ENCODE measurements at regions of chr7 and their contacts with region 1.

Region 1: GRCh38 chr7:140375892-140376730 is 22.2 kb downstream of the SLC37A3 start:
- DNase-seq: peak in 4 of 5 donors; percentile 30 to 48 (median 40)
- H3K4me3 ChIP-seq: peak overlapping the region; percentile 14 to 56
- H3K4me3 Mint-ChIP-seq: peak overlapping the region; percentile 75 to 99 (median 86)
- H3K27ac ChIP-seq: peak overlapping the region; percentile 59
- H3K27ac Mint-ChIP-seq: peak overlapping the region; percentile 84 to 97 (median 93)
- H3K4me1 ChIP-seq: peaks cover 15% of the 10 kb centered on the region
- H3K4me1 Mint-ChIP-seq: peaks cover 10 to 23% (median 13%) of the 10 kb centered on the region in 4 donors
- H3K27me3 ChIP-seq: no peaks in the 10 kb centered on the region
- H3K27me3 Mint-ChIP-seq: no peaks in the 10 kb centered on the region

Region 2: DNA sequence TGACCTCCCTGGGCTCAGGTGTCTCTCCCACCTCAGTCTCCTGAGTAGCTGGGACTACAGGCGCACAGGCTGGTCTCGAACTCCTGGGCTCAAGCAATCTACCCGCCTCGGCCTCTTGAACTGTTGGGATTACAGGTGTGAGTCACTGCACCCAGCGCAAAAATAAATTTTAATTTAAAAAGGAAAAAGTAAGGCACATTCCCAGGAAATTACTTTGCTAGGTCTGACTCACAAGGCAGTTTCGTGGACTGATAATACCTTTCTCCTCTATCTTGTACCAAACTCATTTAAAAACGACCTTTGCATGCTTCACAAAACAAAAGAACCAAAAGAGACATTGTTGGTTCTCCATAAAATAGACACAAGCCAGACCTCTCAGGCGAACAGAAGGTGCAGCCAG is 343.1 kb before region 1 on chr7:
- CTCF ChIA-PET with region 1: no interaction called
- POLR2A ChIA-PET with region 1: no interaction called
- intact Hi-C with region 1: no loop called
- DNase-seq: no peak
- H3K4me3 ChIP-seq: no peak overlapping the region
- H3K4me3 Mint-ChIP-seq: no peak overlapping the region
- H3K27ac ChIP-seq: no peak overlapping the region
- H3K27ac Mint-ChIP-seq: peak overlapping the region in 1 of 7 donors; percentile 77
- H3K4me1 ChIP-seq: peaks cover 11% of the 10 kb centered on the region
- H3K4me1 Mint-ChIP-seq: peaks cover 17 to 38% (median 25%) of the 10 kb centered on the region in 4 donors
- H3K27me3 ChIP-seq: no peaks in the 10 kb centered on the region
- H3K27me3 Mint-ChIP-seq: no peaks in the 10 kb centered on the region

Region 3: GRCh38 chr7:140397784-140398750 is 22.0 kb after region 1 on chr7 and contains the start of gene SLC37A3:
- CTCF ChIA-PET with region 1: interaction called, 10 read pairs
- POLR2A ChIA-PET with region 1: interaction called, 9 read pairs
- intact Hi-C with region 1: no loop called
- DNase-seq: peak; percentile 77 to 85 (median 81)
- H3K4me3 ChIP-seq: peak within 1 kb of the TSS; percentile 33 to 63
- H3K4me3 Mint-ChIP-seq: peak within 1 kb of the TSS; percentile 90 to 95 (median 90)
- H3K27ac ChIP-seq: peak within 1 kb of the TSS; percentile 77
- H3K27ac Mint-ChIP-seq: peak within 1 kb of the TSS; percentile 71 to 94 (median 88)
- H3K4me1 ChIP-seq: peaks cover 21% of the 10 kb centered on the region
- H3K4me1 Mint-ChIP-seq: peaks cover 16 to 26% (median 20%) of the 10 kb centered on the region in 4 donors
- H3K27me3 ChIP-seq: no peaks in the 10 kb centered on the region
- H3K27me3 Mint-ChIP-seq: no peaks in the 10 kb centered on the region
- total RNA-seq, gene SLC37A3: 32.5 to 42.5 TPM

Measured in CD4-positive, alpha-beta memory T cell (primary cell).